Gastrocnemius medialis (tissue), 4 donors: ENCODE measurements at regions of chrX and their contacts with region 1.

Region 1: DNA sequence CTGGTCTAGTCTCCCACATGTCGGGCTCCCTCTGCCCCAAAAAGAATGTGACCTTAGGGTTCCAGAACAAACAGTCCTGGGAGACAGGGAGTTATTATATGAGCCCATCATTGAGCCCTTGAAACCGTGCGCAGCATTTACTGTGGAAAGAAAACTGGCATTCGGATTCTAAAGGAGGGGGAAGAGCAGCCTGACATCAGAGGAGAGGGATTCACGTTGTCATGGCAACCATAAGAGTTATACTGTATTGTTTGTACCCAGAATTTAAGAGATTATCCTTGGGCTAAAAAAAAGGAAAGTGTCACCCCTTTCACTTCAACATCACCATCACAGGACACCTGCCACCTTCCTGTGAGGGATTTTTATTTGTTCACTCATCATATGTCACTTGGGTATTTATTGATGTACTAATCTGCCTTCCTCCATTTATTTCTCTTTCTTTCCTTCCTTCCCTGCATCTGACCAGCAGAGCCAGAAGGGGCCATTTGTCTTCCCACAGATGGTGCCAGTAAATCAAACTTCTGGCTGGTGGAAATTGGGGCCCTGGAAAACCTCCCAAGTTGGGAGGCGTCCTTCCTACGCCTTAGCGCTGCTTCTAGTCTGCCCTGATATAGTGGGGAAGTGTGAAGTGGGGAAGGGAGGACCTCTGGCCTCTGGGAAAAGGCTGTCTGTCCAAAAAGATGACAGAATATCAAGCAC is 64.9 kb upstream of the FRMPD3 start:
- DNase-seq: no peak
- ATAC-seq: no peak
- H3K4me3 ChIP-seq: no peak overlapping the region
- H3K27ac ChIP-seq: no peak overlapping the region
- H3K4me1 ChIP-seq: no peaks in the 10 kb centered on the region
- H3K27me3 ChIP-seq: peaks cover 0 to 16% (median 4%) of the 10 kb centered on the region in 3 donors
- CTCF ChIP-seq: no peak
- POLR2A ChIP-seq: no peak

Region 2: GRCh38 chrX:107355533-107355932 is 29.0 kb before region 1 on chrX:
- in situ Hi-C with region 1: no loop called
- intact Hi-C with region 1: loop called (anchors 2 kb)
- DNase-seq: no peak
- ATAC-seq: no peak
- H3K4me3 ChIP-seq: no peak overlapping the region
- H3K27ac ChIP-seq: no peak overlapping the region
- H3K4me1 ChIP-seq: no peaks in the 10 kb centered on the region
- H3K27me3 ChIP-seq: peaks cover 0 to 6% (median 0%) of the 10 kb centered on the region in 3 donors
- CTCF ChIP-seq: no peak
- POLR2A ChIP-seq: no peak